Activated naive CD4-positive, alpha-beta T cell treated with anti-CD3 and anti-CD28 coated beads for 36 hours (primary cell): ENCODE measurements at regions of chr5 and their contacts with region 1.

Region 1: GRCh38 chr5:34838785-34839714 is at the start of gene TTC23L:
- DNase-seq: peak; percentile 94
- H3K4me3 Mint-ChIP-seq: peak within 1 kb of the TSS; percentile 88
- H3K27ac Mint-ChIP-seq: peak within 1 kb of the TSS; percentile 75
- H3K4me1 Mint-ChIP-seq: peaks cover 11% of the 10 kb centered on the region
- H3K27me3 Mint-ChIP-seq: no peaks in the 10 kb centered on the region
- total RNA-seq, gene TTC23L: 0.42 to 0.43 TPM

Region 2: GRCh38 chr5:34007621-34008600 is 831.1 kb before region 1 on chr5 and contains the start of gene AMACR:
- CTCF ChIA-PET with region 1: interaction called, 3 read pairs
- intact Hi-C with region 1: loop called (anchors 10 kb)
- DNase-seq: peak; percentile 83
- H3K4me3 Mint-ChIP-seq: peak within 1 kb of the TSS; percentile 75
- H3K27ac Mint-ChIP-seq: peak within 1 kb of the TSS; percentile 89
- H3K4me1 Mint-ChIP-seq: peaks cover 26% of the 10 kb centered on the region
- H3K27me3 Mint-ChIP-seq: no peaks in the 10 kb centered on the region
- total RNA-seq, gene AMACR: 8.6 to 10.1 TPM

Region 3: GRCh38 chr5:34499001-34499734 is 339.9 kb before region 1 on chr5:
- CTCF ChIA-PET with region 1: no interaction called
- intact Hi-C with region 1: loop called (anchors 1 kb)
- DNase-seq: peak; percentile 63
- H3K4me3 Mint-ChIP-seq: no peak overlapping the region
- H3K27ac Mint-ChIP-seq: peak overlapping the region; percentile 74
- H3K4me1 Mint-ChIP-seq: peaks cover 13% of the 10 kb centered on the region
- H3K27me3 Mint-ChIP-seq: peaks cover 18% of the 10 kb centered on the region

Region 4: GRCh38 chr5:34656001-34656699 is 182.9 kb before region 1 on chr5 and contains the start of gene RAI14:
- CTCF ChIA-PET with region 1: no interaction called
- intact Hi-C with region 1: loop called (anchors 1 kb)
- DNase-seq: peak; percentile 35
- H3K4me3 Mint-ChIP-seq: peak within 1 kb of the TSS; percentile 78
- H3K27ac Mint-ChIP-seq: peak within 1 kb of the TSS; percentile 8
- H3K4me1 Mint-ChIP-seq: peaks cover 17% of the 10 kb centered on the region
- H3K27me3 Mint-ChIP-seq: peaks cover 31% of the 10 kb centered on the region
- total RNA-seq, gene RAI14: 5.8 to 6.7 TPM

Region 5: DNA sequence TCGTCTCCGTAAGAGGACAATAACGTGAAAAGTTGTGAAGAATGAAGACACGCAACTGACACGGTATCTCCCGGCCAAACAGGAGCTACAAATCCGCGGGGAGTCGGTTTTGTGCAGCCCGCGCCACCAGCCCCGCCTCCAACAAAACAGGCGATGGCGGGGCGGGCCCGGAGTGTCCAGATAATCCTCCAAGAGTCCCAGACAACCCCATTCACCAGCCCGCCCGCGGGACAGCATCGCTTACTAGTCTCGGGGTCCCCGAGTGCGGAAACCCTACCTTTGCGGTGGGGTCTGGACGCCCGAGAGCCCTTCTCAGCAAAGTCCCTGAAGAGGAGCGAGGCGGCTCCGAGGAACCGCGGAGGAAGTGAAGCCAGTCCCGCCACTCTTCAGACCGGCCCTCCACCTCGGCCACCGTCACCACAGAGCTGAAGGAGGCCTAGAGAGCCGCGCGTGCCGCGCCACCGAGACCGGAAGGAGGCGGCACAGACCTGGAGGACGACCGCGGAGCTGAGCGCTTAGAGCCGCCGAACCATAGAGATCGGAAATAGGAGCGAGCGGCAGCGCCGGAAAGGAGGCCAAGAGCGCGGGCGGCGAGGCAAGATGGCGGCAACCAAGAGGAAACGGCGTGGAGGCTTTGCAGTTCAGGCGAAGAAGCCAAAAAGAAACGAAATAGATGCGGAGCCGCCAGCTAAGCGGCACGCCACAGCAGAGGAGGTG is 76.2 kb after region 1 on chr5 and contains the starts of genes BRIX1 and RAD1:
- CTCF ChIA-PET with region 1: interaction called, 3 read pairs
- intact Hi-C with region 1: loop called (anchors 1 kb)
- DNase-seq: peak; percentile 97
- H3K4me3 Mint-ChIP-seq: no peak within 1 kb of the TSS
- H3K27ac Mint-ChIP-seq: peak within 1 kb of the TSS; percentile 52
- H3K4me1 Mint-ChIP-seq: peaks cover 32% of the 10 kb centered on the region
- H3K27me3 Mint-ChIP-seq: no peaks in the 10 kb centered on the region
- total RNA-seq, gene BRIX1: 66.5 to 69.0 TPM
- total RNA-seq, gene RAD1: 38.8 to 40.7 TPM

Region 6: GRCh38 chr5:36151434-36152323 is 1312.6 kb after region 1 on chr5 and contains the starts of genes LMBRD2 and SKP2:
- CTCF ChIA-PET with region 1: no interaction called
- intact Hi-C with region 1: loop called (anchors 5 kb)
- DNase-seq: peak; percentile 98
- H3K4me3 Mint-ChIP-seq: peak within 1 kb of the TSS; percentile 96
- H3K27ac Mint-ChIP-seq: peak within 1 kb of the TSS; percentile 76
- H3K4me1 Mint-ChIP-seq: peaks cover 67% of the 10 kb centered on the region
- H3K27me3 Mint-ChIP-seq: no peaks in the 10 kb centered on the region
- total RNA-seq, gene LMBRD2: 7.6 to 8.0 TPM
- total RNA-seq, gene SKP2: 44.4 to 48.1 TPM